ENCODE measurements at regions of chr7 and their contacts with region 1.

Region 1: DNA sequence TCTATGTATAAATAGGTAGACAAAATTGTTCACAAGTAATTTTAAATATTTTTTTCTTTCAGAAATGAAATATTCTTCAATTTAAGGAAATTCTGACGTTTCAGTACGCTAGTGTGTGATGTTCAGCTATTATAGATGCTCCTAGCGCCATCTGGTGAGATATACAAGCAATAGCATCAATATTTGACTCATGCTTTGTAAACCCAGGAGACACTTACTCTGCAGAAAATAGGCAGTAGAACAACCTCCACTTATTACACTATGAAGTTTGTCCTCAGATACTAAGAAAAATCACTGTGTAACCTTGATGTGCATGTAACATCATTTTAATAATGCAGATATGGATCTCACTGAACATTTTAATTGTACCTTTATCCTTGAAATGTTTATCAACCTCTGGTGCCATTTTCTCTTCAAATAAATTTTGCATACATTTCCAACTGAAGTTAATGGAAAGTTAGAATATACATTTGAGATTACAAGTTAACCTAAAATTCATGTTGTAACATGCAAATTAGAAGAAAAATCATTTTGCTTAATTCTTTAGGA is 151.5 kb upstream of the FAM3C start:
- DNase-seq: peak; percentile 66
- H3K4me3 Mint-ChIP-seq: no peak overlapping the region
- H3K27ac Mint-ChIP-seq: peak overlapping the region; percentile 2
- H3K4me1 Mint-ChIP-seq: peaks cover 41% of the 10 kb centered on the region
- H3K27me3 Mint-ChIP-seq: peaks cover 2% of the 10 kb centered on the region

Region 2: GRCh38 chr7:120987683-120988590 is 559.7 kb before region 1 on chr7:
- intact Hi-C with region 1: loop called (anchors 10 kb)
- DNase-seq: peak; percentile 95
- H3K4me3 Mint-ChIP-seq: peak overlapping the region; percentile 85
- H3K27ac Mint-ChIP-seq: no peak overlapping the region
- H3K4me1 Mint-ChIP-seq: peaks cover 14% of the 10 kb centered on the region
- H3K27me3 Mint-ChIP-seq: peaks cover 54% of the 10 kb centered on the region

Region 3: GRCh38 chr7:121278120-121279021 is 269.2 kb before region 1 on chr7:
- intact Hi-C with region 1: loop called (anchors 2 kb)
- DNase-seq: no peak
- H3K4me3 Mint-ChIP-seq: peak overlapping the region; percentile 29
- H3K27ac Mint-ChIP-seq: peak overlapping the region; percentile 70
- H3K4me1 Mint-ChIP-seq: peaks cover 19% of the 10 kb centered on the region
- H3K27me3 Mint-ChIP-seq: peaks cover 18% of the 10 kb centered on the region

Region 4: GRCh38 chr7:121395961-121396757 is 151.5 kb before region 1 on chr7 and contains the start of gene FAM3C:
- intact Hi-C with region 1: loop called (anchors 1 kb)
- DNase-seq: peak; percentile 95
- H3K4me3 Mint-ChIP-seq: peak within 1 kb of the TSS; percentile 88
- H3K27ac Mint-ChIP-seq: peak within 1 kb of the TSS; percentile 96
- H3K4me1 Mint-ChIP-seq: peaks cover 33% of the 10 kb centered on the region
- H3K27me3 Mint-ChIP-seq: no peaks in the 10 kb centered on the region
- total RNA-seq, gene FAM3C: 77.5 and 80.2 TPM in 2 replicates

Region 5: GRCh38 chr7:121410829-121411596 is 136.6 kb before region 1 on chr7:
- intact Hi-C with region 1: no loop called
- DNase-seq: no peak
- H3K4me3 Mint-ChIP-seq: no peak overlapping the region
- H3K27ac Mint-ChIP-seq: no peak overlapping the region
- H3K4me1 Mint-ChIP-seq: peaks cover 7% of the 10 kb centered on the region
- H3K27me3 Mint-ChIP-seq: peaks cover 12% of the 10 kb centered on the region

Region 6: DNA sequence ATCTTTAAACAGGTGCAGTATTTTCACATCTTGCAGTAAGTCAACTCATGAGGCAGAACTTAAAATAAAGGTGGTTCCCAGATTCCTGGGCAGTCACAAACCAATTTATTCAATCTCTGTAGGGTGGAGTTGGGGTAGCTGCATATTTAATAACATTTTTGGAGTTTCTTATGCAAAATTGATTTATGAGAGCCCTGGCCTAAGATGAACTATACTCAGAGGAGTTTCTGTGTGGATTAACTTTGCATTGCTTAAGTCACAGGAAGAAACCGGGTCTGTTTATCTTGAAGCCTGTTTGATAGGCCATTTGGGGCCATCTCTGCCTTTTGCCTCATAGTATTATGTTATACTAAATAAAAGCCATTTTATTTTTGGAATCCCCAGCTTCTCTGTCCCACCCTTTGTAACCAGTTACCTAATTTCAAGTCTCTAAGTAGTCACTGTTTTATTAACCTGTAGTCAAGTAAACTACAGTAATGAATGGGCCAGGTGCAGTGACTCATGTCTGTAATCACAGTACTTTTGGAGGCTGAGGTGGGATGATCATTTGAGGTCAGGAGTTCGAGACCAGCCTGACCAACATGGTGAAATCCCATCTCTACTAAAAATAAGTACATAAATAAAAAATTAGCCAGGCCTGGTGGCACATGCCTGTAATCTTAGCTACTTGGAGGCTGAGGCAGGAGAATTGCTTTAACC is 47.1 kb before region 1 on chr7:
- intact Hi-C with region 1: loop called (anchors 1 kb)
- DNase-seq: no peak
- H3K4me3 Mint-ChIP-seq: no peak overlapping the region
- H3K27ac Mint-ChIP-seq: peak overlapping the region; percentile 94
- H3K4me1 Mint-ChIP-seq: peaks cover 26% of the 10 kb centered on the region
- H3K27me3 Mint-ChIP-seq: no peaks in the 10 kb centered on the region

Measured in activated CD4-positive, alpha-beta T cell treated with anti-CD3 and anti-CD28 coated beads, Interleukin-2, amount 10 ng/mL, durations not matched to agents 24 days and 14 days (primary cell).